Heart right ventricle (tissue), 16 donors: ENCODE measurements at regions of chr1 and their contacts with region 1.

Region 1: DNA sequence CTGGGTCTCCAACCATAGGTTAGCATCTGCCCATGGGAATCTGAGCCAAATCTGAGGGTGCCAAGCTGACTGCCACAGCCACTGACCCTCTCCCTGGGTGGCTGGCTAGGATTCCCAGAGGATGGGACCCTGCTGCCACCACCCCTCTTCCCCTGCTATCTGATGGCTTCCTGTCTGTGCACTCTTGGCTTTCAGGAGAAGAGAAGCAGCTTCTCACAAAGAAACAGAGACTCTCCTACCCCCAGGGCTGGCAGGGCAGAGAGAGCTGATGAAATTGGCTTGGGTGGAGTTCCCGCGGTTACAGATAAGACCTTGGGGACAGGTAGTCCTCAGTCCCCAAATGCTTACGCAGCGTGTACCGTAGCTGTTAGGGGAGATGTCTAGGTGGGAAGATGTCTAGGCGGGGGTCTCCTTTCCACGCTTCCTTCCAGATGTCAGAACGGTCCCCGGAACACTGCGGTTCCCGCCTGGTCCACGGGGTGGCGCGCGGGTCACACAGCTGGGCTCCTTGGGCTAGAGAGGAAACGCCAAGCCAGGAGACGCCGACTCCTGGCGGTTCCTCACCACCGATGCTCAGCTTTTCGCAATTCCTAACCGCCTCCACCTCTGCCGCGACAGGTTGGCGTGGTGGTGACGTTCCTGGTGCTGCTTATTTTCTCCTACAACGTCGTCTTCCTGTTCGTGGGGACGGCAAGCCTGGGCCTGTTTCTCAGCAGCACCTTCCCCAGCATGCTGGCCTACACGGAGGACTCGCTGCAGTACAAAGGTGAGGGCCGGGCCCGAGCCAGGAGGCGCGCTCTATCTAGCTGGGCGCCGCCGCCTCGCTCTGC is 40.1 kb downstream of the ELK4 start:
- DNase-seq: peak; percentile 86 to 88
- ATAC-seq: peak; percentile 86 to 96 (median 93)
- H3K4me3 ChIP-seq: peak overlapping the region in 9 of 10 donors; percentile 31 to 60 (median 46)
- H3K27ac ChIP-seq: peak overlapping the region in 5 of 10 donors; percentile 9 to 51 (median 36)
- H3K4me1 ChIP-seq: peaks cover 0 to 36% (median 17%) of the 10 kb centered on the region in 9 donors
- H3K27me3 ChIP-seq: no peaks in the 10 kb centered on the region
- CTCF ChIP-seq: peak; percentile 98 to 99 (median 99)

Region 2: GRCh38 chr1:205523891-205524793 is 67.6 kb before region 1 on chr1:
- intact Hi-C with region 1: loop called in 4 of 10 experiments (anchors 2 to 5 kb)
- DNase-seq: peak; percentile 80 to 84
- ATAC-seq: peak; percentile 35 to 71 (median 50)
- H3K4me3 ChIP-seq: no peak overlapping the region
- H3K27ac ChIP-seq: peak overlapping the region in 1 of 10 donors; percentile 55
- H3K4me1 ChIP-seq: peaks cover 21 to 85% (median 59%) of the 10 kb centered on the region in 9 donors
- H3K27me3 ChIP-seq: no peaks in the 10 kb centered on the region
- CTCF ChIP-seq: peak; percentile 56 to 88 (median 83)

Region 3: GRCh38 chr1:205528887-205529825 is 62.6 kb before region 1 on chr1:
- intact Hi-C with region 1: loop called in 6 of 10 experiments (anchors 2 to 10 kb)
- DNase-seq: peak; percentile 82 to 85
- ATAC-seq: peak; percentile 57 to 85 (median 79)
- H3K4me3 ChIP-seq: peak overlapping the region in 9 of 10 donors; percentile 9 to 50 (median 46)
- H3K27ac ChIP-seq: peak overlapping the region in 3 of 10 donors; percentile 11 to 47 (median 44)
- H3K4me1 ChIP-seq: peaks cover 11 to 41% (median 22%) of the 10 kb centered on the region in 9 donors
- H3K27me3 ChIP-seq: no peaks in the 10 kb centered on the region
- CTCF ChIP-seq: peak; percentile 89 to 99 (median 95)

Region 4: GRCh38 chr1:205536759-205537361 is 54.9 kb before region 1 on chr1:
- intact Hi-C with region 1: loop called in 2 of 10 experiments (anchors 5 to 10 kb)
- DNase-seq: no peak
- ATAC-seq: peak; percentile 25 to 80 (median 65)
- H3K4me3 ChIP-seq: no peak overlapping the region
- H3K27ac ChIP-seq: peak overlapping the region in 2 of 10 donors; percentile 35 to 38
- H3K4me1 ChIP-seq: peaks cover 0 to 34% (median 12%) of the 10 kb centered on the region in 9 donors
- H3K27me3 ChIP-seq: peaks cover 0 to 8% (median 0%) of the 10 kb centered on the region in 7 donors
- CTCF ChIP-seq: no peak

Region 5: DNA sequence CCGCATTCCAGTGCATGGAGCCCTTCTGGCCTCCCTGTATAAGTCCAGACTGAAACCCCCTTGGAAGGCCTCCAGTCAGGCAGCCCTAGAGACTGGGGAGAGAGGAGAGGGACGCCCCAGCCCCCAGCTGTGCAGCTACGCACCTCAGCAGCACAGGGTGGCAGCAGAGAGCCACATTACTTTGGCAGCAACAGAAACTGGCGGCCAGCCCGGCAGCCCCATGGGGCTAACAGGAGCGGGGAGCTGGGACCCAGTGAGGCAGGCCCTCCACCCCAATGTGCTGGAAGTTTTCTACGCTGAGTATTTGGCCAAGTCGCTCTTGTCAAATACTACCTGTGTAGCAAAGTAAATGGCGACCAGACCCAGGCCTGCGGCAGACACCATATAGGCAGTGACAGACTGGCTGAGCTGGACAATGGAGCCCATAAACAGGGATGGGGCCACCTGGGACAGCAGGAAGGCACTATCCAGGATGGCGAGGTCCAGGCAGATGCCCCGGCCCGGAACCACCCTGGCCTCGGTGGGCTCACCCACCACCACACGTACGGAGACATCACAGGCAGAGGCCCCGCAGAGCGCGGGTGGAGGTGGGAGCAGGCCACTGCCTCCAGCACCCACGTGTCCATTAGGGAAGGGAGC is 67.3 kb after region 1 on chr1:
- intact Hi-C with region 1: loop called (anchors 1 to 5 kb)
- DNase-seq: peak; percentile 77 to 86
- ATAC-seq: peak; percentile 76 to 91 (median 86)
- H3K4me3 ChIP-seq: no peak overlapping the region
- H3K27ac ChIP-seq: no peak overlapping the region
- H3K4me1 ChIP-seq: peaks cover 0 to 18% (median 8%) of the 10 kb centered on the region in 9 donors
- H3K27me3 ChIP-seq: no peaks in the 10 kb centered on the region
- CTCF ChIP-seq: peak; percentile 72 to 97 (median 88)

Region 6: GRCh38 chr1:205711104-205712020 is 119.6 kb after region 1 on chr1:
- intact Hi-C with region 1: loop called in 4 of 10 experiments (anchors 2 to 10 kb)
- DNase-seq: peak in 1 of 2 donors; percentile 79
- ATAC-seq: peak; percentile 76 to 87 (median 80)
- H3K4me3 ChIP-seq: no peak overlapping the region
- H3K27ac ChIP-seq: peak overlapping the region in 1 of 10 donors; percentile 24
- H3K4me1 ChIP-seq: peaks cover 0 to 41% (median 22%) of the 10 kb centered on the region in 9 donors
- H3K27me3 ChIP-seq: no peaks in the 10 kb centered on the region
- CTCF ChIP-seq: peak; percentile 76 to 94 (median 90)